ENCODE measurements at regions of chr19 and their contacts with region 1.

Region 1: DNA sequence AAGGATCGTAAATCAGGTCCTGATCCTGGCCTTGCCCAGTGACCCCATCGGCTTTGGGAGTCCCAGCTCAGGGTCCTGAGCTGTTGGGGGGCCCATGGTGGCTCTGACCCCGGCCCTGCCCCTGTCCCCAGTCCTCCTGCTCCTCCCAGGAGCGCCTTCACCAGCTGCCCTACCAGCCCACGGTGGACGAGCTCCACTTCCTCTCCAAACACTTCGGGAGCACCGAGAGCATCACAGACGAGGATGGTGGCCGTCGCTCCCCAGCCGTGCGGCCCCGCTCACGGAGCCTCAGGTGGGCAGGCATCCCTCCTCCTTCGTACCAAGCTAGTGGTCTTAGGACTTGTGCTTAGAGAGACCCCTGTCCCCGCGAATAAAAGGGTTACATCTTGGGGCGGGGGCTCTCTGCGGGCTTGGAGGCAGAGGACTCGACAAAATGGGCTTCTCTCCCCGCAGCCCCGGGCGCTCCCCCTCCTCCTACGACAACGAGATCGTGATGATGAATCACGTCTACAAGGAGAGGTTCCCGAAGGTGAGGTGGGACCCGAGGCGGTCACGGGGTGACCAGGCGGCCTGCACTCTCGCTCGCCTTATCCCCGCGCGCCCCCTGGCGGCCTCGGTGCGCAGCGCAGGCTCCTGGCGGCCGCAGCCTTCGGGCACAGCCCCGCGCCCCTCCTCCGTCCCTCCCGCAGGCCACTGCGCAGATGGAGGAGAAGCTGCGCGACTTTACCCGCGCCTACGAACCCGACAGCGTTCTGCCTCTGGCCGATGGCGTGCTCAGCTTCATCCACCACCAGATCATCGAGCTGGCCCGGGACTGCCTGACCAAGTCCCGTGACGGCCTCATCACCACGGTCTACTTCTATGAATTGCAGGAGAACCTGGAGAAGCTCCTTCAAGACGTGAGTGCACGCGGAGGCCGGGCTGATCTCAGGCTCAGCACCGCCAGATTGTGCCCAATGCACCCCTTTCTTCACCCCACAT is 9.1 kb downstream of the MAST1 start:
- DNase-seq: no peak
- ATAC-seq: peak; percentile 96
- H3K4me3 ChIP-seq: peak overlapping the region in 1 of 2 experiments; percentile 34; a peak in 2 of 4 replicates
- H3K27ac ChIP-seq: no peak overlapping the region
- H3K4me1 ChIP-seq: no peaks in the 10 kb centered on the region
- H3K27me3 ChIP-seq: no peaks in the 10 kb centered on the region
- CTCF ChIP-seq: peak; percentile 97

Region 2: DNA sequence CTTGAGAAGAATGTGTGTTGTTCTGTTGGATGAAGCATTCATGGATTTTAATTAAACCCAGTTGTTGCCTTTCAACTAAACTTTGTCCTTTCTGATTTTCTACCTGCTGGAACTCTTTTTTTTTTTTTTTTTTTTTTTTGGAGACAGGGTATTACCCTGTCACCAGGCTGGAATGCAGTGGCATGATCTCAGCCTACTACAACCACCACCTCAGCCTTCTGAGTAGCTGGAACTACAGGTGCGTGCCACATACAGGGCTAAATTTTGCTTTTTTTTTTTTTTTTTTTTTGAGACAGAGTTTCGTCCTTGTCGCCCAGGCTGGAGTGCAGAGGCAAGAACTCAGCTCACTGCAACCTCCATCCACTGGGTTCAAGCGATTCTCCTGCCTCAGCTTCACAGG is 229.8 kb before region 1 on chr19:
- CTCF ChIA-PET with region 1: no interaction called
- POLR2A ChIA-PET with region 1: no interaction called
- in situ Hi-C with region 1: no loop called
- intact Hi-C with region 1: no loop called
- DNase-seq: no peak
- ATAC-seq: no peak
- H3K4me3 ChIP-seq: no peak overlapping the region
- H3K27ac ChIP-seq: no peak overlapping the region
- H3K4me1 ChIP-seq: no peaks in the 10 kb centered on the region
- H3K27me3 ChIP-seq: no peaks in the 10 kb centered on the region
- CTCF ChIP-seq: no peak

Region 3: DNA sequence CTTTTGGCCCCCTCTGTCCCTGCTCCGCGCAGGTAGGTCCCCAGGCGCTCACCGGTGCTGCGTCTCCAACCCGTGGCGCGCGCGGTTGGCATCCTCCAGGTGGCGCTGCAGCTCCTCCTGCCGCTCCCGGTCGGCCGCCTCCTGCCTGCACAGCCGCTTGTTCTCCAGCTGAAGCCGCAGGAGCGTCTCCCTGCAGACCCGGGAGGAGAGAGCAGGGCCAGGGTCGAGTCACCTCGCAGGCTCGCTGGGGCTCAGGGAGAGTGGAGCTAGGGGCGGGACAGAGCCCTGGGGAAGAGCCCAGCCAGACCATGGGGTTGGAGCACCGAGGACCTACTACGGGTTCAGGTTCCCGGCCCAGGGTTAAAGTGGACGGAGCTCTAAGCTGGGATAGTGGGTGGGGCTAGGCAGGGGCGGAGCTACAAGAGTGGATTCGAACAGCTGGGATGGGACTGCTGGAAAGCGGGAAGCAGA is 81.4 kb before region 1 on chr19:
- CTCF ChIA-PET with region 1: interaction called, 14 read pairs
- POLR2A ChIA-PET with region 1: interaction called, 3 read pairs
- in situ Hi-C with region 1: no loop called
- intact Hi-C with region 1: no loop called
- DNase-seq: no peak
- ATAC-seq: peak; percentile 98
- H3K4me3 ChIP-seq: peak overlapping the region; percentile 52 to 60
- H3K27ac ChIP-seq: peak overlapping the region; percentile 44; the same call in 1 of the 2 replicates
- H3K4me1 ChIP-seq: no peaks in the 10 kb centered on the region
- H3K27me3 ChIP-seq: no peaks in the 10 kb centered on the region
- CTCF ChIP-seq: peak; percentile 94

Region 4: GRCh38 chr19:12825254-12826131 is 22.0 kb before region 1 on chr19:
- CTCF ChIA-PET with region 1: no interaction called
- POLR2A ChIA-PET with region 1: no interaction called
- in situ Hi-C with region 1: no loop called
- intact Hi-C with region 1: no loop called
- DNase-seq: no peak
- ATAC-seq: no peak
- H3K4me3 ChIP-seq: no peak overlapping the region
- H3K27ac ChIP-seq: no peak overlapping the region
- H3K4me1 ChIP-seq: no peaks in the 10 kb centered on the region
- H3K27me3 ChIP-seq: no peaks in the 10 kb centered on the region
- CTCF ChIP-seq: no peak; the same call in 1 of the 2 replicates

Region 5: DNA sequence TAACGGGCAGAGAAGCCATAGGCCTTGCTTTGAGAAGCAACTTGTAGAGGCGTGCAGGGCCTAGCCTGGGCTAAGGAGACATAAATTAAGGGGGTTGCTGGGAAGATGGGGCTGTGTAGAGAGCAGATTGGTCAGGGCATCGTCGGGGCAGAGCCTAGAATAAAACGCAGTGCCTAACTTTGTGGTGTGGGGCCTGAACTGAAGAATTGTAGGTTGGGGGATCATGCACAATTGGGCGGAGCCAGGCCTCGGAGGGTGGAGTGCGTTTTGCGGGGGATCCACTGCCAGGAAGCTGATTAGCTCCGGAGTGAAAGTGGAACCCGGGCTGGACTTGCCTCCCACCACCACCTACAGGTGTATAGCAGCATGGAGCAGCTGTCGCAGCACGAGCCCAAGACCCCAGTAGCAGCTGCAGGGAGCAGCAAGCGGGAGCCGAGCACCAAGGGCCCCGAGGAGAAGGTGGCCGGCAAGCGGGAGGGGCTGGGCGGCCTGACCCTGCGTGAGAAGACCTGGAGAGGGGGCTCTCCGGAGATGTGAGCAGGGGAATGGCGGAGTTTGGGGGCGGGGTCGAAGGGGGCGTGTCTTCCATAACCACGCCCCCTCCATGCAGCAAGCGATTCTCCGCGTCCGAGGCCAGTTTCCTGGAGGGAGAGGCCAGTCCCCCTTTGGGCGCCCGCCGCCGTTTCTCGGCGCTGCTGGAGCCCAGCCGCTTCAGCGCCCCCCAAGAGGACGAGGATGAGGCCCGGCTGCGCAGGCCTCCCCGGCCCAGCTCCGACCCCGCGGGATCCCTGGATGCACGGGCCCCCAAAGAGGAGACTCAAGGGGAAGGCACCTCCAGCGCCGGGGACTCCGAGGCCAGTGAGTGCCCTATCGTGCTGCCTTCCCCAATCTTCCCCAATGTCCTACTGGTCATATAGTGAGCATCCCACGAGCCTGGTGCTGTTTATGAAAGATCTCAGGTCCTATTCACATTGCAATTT is 20.0 kb after region 1 on chr19:
- CTCF ChIA-PET with region 1: interaction called, 14 read pairs
- POLR2A ChIA-PET with region 1: interaction called, 15 read pairs
- in situ Hi-C with region 1: no loop called
- intact Hi-C with region 1: no loop called
- DNase-seq: no peak
- ATAC-seq: 0 out of 2 replicates have a peak, but pooled peaks have one; percentile 22
- H3K4me3 ChIP-seq: no peak overlapping the region
- H3K27ac ChIP-seq: no peak overlapping the region
- H3K4me1 ChIP-seq: no peaks in the 10 kb centered on the region
- H3K27me3 ChIP-seq: no peaks in the 10 kb centered on the region
- CTCF ChIP-seq: no peak

Region 6: GRCh38 chr19:12872941-12873890 is 25.8 kb after region 1 on chr19:
- CTCF ChIA-PET with region 1: interaction called, 14 read pairs
- POLR2A ChIA-PET with region 1: interaction called, 15 read pairs
- in situ Hi-C with region 1: no loop called
- intact Hi-C with region 1: no loop called
- DNase-seq: no peak
- ATAC-seq: peak; percentile 79
- H3K4me3 ChIP-seq: peak overlapping the region; percentile 13 to 27; a peak in 2 of 4 replicates
- H3K27ac ChIP-seq: no peak overlapping the region
- H3K4me1 ChIP-seq: no peaks in the 10 kb centered on the region
- H3K27me3 ChIP-seq: no peaks in the 10 kb centered on the region
- CTCF ChIP-seq: no peak; the same call in 1 of the 2 replicates